ENCODE measurements at regions of chr2 and their contacts with region 1.

Region 1: GRCh38 chr2:120693121-120693520 is 42.5 kb upstream of the GLI2 start:
- DNase-seq: no peak
- ATAC-seq: no peak
- H3K4me3 Mint-ChIP-seq: no peak overlapping the region
- H3K27ac Mint-ChIP-seq: no peak overlapping the region
- H3K4me1 Mint-ChIP-seq: peaks cover 20% of the 10 kb centered on the region
- H3K27me3 Mint-ChIP-seq: peaks cover 61% of the 10 kb centered on the region
- CTCF ChIP-seq: no peak

Region 2: DNA sequence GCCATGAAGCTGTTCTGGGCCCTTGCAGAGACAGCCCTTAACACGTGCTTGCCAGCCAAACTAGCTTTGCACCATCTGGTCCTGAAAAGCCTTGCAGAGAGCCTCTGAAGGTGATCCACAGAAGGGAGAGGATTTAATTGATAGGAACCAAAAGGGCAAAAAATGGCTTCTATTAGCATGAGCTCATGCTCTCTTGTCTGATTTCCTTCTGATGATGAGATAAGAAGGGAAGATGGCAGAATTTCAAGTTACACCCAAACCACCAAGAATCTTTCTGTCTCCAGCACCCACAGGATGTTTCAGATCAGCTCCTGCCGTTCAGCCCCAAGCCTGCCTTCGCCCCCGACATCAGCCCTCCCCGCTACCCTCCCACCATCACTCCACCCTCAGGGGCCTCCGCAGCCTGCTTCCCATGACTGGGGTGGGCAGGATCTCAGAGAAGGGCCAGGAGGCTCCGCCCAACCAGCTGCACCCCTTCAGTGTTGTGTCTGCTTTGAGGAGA is 19.1 kb after region 1 on chr2:
- CTCF ChIA-PET with region 1: interaction called, 32 read pairs
- POLR2A ChIA-PET with region 1: interaction called, 3 read pairs
- DNase-seq: no peak
- ATAC-seq: no peak
- H3K4me3 Mint-ChIP-seq: no peak overlapping the region
- H3K27ac Mint-ChIP-seq: no peak overlapping the region
- H3K4me1 Mint-ChIP-seq: peaks cover 71% of the 10 kb centered on the region
- H3K27me3 Mint-ChIP-seq: peaks cover 67% of the 10 kb centered on the region
- CTCF ChIP-seq: no peak

Region 3: DNA sequence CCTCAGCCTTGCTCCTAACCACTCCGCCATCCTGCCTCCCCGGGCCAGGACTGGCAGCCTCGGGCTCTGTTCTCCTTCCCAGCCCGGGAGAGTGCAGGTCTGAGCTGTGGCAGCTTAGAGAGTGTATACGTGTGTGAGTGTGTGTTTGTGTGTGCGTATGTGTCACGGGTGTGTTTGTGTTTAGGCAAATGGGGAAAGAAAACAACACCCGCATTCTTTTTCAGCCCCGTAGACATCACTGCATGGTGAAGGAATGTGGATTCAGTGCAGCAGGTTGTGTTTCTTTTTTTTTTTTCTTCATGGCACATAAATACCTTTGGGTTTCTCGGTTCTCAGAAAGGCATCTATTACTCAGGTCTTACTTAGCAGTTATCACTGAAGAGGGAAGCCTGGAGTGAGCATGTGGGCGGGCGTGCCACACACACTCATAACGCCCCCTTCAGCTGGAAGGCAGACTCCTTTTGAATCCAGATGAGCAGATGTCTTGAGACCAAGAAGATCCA is 86.7 kb after region 1 on chr2:
- CTCF ChIA-PET with region 1: interaction called, 12 read pairs
- POLR2A ChIA-PET with region 1: no interaction called
- DNase-seq: no peak
- ATAC-seq: peak; percentile 56
- H3K4me3 Mint-ChIP-seq: no peak overlapping the region
- H3K27ac Mint-ChIP-seq: peak overlapping the region; percentile 82
- H3K4me1 Mint-ChIP-seq: peaks cover 39% of the 10 kb centered on the region
- H3K27me3 Mint-ChIP-seq: no peaks in the 10 kb centered on the region
- CTCF ChIP-seq: no peak

Region 4: GRCh38 chr2:120833127-120833675 is 140.1 kb after region 1 on chr2:
- CTCF ChIA-PET with region 1: interaction called, 10 read pairs
- POLR2A ChIA-PET with region 1: no interaction called
- DNase-seq: peak; percentile 39
- ATAC-seq: peak; percentile 67
- H3K4me3 Mint-ChIP-seq: no peak overlapping the region
- H3K27ac Mint-ChIP-seq: peak overlapping the region; percentile 89
- H3K4me1 Mint-ChIP-seq: peaks cover 32% of the 10 kb centered on the region
- H3K27me3 Mint-ChIP-seq: no peaks in the 10 kb centered on the region
- CTCF ChIP-seq: no peak

Region 5: DNA sequence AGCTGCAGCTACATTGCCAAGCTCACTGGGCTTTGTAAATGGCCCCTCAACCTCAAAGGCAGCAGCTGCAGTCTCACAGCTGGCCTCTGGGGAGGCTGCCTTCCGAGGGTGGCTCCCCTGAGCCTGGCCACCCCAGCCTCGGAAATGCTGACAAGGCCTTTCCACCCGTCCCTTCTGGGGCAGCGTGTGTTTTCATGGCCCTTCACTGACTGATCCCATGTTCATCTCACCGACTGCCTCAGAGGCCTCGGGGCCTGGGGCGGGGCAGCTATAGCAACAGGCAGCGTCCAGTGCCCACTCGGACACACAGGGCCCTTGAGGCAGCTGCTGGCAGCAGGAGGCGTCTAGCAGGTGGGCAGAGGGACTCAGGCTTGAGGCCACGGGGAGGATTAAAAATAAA is 192.2 kb after region 1 on chr2:
- CTCF ChIA-PET with region 1: interaction called, 24 read pairs
- POLR2A ChIA-PET with region 1: no interaction called
- DNase-seq: no peak
- ATAC-seq: peak; percentile 29
- H3K4me3 Mint-ChIP-seq: no peak overlapping the region
- H3K27ac Mint-ChIP-seq: peak overlapping the region; percentile 56; the same call in 1 of the 2 replicates
- H3K4me1 Mint-ChIP-seq: peaks cover 50% of the 10 kb centered on the region
- H3K27me3 Mint-ChIP-seq: no peaks in the 10 kb centered on the region
- CTCF ChIP-seq: no peak

Region 6: DNA sequence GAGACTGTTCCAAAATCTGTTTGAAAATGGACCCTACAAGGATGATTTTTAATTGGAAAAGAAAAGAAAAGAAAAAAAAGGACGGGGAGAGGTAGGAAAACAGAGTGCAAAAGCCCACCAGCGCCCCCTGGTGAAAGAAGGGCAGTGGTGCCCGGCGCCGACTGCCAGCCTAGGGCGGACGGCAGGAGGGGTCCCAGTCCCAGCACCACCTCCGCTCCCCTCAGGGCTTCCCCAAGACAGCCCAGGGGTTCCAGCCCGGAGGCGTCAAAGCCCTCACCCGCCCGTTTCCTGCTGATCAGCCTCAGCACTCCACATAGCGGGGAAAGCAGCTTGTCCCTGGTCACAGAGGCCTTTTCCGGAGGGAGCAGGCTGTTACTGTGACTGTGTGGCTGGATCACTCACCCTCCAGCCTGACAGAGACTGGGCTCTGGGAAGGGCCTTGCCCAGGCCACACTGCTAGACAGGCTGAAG is 377.9 kb after region 1 on chr2:
- CTCF ChIA-PET with region 1: interaction called, 55 read pairs
- POLR2A ChIA-PET with region 1: interaction called, 12 read pairs
- DNase-seq: peak; percentile 92
- ATAC-seq: peak; percentile 38
- H3K4me3 Mint-ChIP-seq: no peak overlapping the region
- H3K27ac Mint-ChIP-seq: no peak overlapping the region
- H3K4me1 Mint-ChIP-seq: peaks cover 14% of the 10 kb centered on the region
- H3K27me3 Mint-ChIP-seq: peaks cover 17% of the 10 kb centered on the region
- CTCF ChIP-seq: peak; percentile 93